HepG2 (cell line): ENCODE measurements at regions of chr1 and their contacts with region 1.

Region 1: GRCh38 chr1:151372061-151372934 is at the start of gene SELENBP1:
- DNase-seq: peak; percentile 81
- ATAC-seq: peak; percentile 93
- H3K4me3 ChIP-seq: peak within 1 kb of the TSS; percentile 61 to 79 (median 70)
- H3K27ac ChIP-seq: peak within 1 kb of the TSS; percentile 82
- H3K4me1 ChIP-seq: peaks cover 41% of the 10 kb centered on the region
- H3K27me3 ChIP-seq: no peaks in the 10 kb centered on the region; a peak in 1 of 5 replicates
- CTCF ChIP-seq: no peak
- EP300 ChIP-seq: no peak
- POLR2A ChIP-seq: peak; percentile 87 to 93
- RAD21 ChIP-seq: no peak
- total RNA-seq, gene SELENBP1: 29.0 and 30.2 TPM in 2 replicates

Region 2: DNA sequence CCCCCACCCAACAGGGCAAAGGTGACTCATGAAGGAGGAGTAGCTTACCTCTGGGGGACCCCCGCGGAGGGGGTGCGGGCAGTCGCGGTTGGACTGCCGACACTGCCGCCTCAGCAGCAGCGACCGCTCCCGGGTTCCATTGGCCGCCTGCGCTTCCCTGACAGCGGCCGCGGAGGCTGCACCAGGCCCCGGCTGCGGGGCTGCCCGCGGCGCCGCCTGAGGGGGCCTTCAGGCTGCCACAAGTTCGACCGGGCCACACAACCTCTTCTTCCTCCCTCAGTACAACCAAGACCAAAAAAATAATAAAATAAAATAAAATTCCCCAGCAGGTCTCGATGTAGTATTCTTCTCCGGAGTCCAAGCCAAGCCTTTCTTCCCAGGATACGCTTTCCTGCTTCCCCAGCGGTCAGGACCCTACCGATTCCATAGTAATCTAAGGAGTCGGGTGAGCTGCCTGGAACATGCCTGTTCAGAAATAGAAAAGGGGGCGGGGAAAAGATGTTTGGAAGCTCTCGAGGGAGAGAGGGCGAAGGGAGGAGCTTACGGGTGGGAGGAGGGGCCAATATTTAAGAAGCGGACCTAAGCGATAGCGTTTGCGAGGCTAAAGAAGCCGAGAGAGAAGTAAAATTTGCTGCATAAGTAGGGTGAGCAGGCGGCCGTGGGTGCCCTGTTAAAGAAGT is 44.9 kb before region 1 on chr1 and contains the start of gene PI4KB:
- CTCF ChIA-PET with region 1: no interaction called
- POLR2A ChIA-PET with region 1: interaction called, 12 read pairs
- in situ Hi-C with region 1: no loop called
- intact Hi-C with region 1: no loop called
- DNase-seq: peak; percentile 97
- ATAC-seq: peak; percentile 92
- H3K4me3 ChIP-seq: peak within 1 kb of the TSS; percentile 78 to 82 (median 79)
- H3K27ac ChIP-seq: peak within 1 kb of the TSS; percentile 93
- H3K4me1 ChIP-seq: peaks cover 33% of the 10 kb centered on the region
- H3K27me3 ChIP-seq: no peaks in the 10 kb centered on the region; a peak in 1 of 5 replicates
- CTCF ChIP-seq: no peak
- EP300 ChIP-seq: no peak
- POLR2A ChIP-seq: peak; percentile 58 to 69
- RAD21 ChIP-seq: no peak
- total RNA-seq, gene PI4KB: 18.6 and 19.5 TPM in 2 replicates

Region 3: DNA sequence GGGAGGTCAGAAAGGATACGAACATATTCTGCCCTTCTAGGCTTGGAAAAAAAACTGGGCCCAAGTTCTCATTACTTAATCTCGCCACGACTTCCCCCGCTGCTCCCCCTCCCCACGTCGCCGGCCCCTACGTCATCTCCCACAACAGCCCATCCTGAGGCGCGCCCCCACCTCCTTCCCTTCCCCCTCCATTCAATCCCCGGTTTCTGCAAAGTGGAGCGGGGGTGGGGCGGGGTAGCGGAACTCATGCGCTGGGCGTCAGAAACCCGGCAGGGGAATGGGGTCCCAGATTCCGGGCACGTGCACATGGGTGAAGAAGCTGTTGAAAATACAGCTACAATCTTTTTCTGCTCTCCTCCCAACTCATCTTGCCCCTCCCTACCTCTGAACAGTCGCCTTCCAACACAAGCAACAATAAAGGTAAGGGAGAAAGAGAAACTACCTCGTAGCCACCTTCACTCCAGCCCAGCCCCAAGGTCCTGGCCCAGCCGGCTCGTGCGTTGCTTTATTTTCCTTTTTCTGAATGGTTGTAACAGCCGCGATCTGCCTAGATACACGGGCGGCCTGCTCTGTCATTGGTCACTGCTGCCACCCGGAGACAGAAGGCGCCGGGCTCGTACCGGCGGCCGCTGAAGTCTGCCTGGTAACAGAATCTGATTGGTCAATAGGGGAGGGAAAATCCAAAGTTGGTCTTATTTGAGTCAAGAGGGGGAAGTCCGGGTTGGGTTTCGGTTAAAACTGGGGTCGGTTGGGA is 25.4 kb before region 1 on chr1 and contains the start of gene RFX5:
- CTCF ChIA-PET with region 1: no interaction called
- POLR2A ChIA-PET with region 1: interaction called, 11 read pairs
- in situ Hi-C with region 1: no loop called
- intact Hi-C with region 1: loop called (anchors 1 kb)
- DNase-seq: peak; percentile 95
- ATAC-seq: peak; percentile 98
- H3K4me3 ChIP-seq: peak within 1 kb of the TSS; percentile 62 to 73 (median 72)
- H3K27ac ChIP-seq: peak within 1 kb of the TSS; percentile 87
- H3K4me1 ChIP-seq: peaks cover 19% of the 10 kb centered on the region
- H3K27me3 ChIP-seq: no peaks in the 10 kb centered on the region
- CTCF ChIP-seq: 0 out of 2 replicates have a peak, but pooled peaks have one; percentile 12
- EP300 ChIP-seq: peak in 1 of 2 experiments; percentile 61; a peak in 2 of 4 replicates
- POLR2A ChIP-seq: peak; percentile 48 to 76; a peak in 3 of 4 replicates
- RAD21 ChIP-seq: no peak
- total RNA-seq, gene RFX5: 32.0 and 36.2 TPM in 2 replicates

Region 4: GRCh38 chr1:151352006-151352689 is 20.1 kb before region 1 on chr1:
- CTCF ChIA-PET with region 1: no interaction called
- POLR2A ChIA-PET with region 1: interaction called, 11 read pairs
- in situ Hi-C with region 1: no loop called
- intact Hi-C with region 1: loop called (anchors 1 kb)
- DNase-seq: peak; percentile 24
- ATAC-seq: no peak
- H3K4me3 ChIP-seq: no peak overlapping the region
- H3K27ac ChIP-seq: no peak overlapping the region
- H3K4me1 ChIP-seq: peaks cover 16% of the 10 kb centered on the region
- H3K27me3 ChIP-seq: no peaks in the 10 kb centered on the region
- CTCF ChIP-seq: no peak
- EP300 ChIP-seq: no peak
- POLR2A ChIP-seq: no peak
- RAD21 ChIP-seq: no peak

Region 5: DNA sequence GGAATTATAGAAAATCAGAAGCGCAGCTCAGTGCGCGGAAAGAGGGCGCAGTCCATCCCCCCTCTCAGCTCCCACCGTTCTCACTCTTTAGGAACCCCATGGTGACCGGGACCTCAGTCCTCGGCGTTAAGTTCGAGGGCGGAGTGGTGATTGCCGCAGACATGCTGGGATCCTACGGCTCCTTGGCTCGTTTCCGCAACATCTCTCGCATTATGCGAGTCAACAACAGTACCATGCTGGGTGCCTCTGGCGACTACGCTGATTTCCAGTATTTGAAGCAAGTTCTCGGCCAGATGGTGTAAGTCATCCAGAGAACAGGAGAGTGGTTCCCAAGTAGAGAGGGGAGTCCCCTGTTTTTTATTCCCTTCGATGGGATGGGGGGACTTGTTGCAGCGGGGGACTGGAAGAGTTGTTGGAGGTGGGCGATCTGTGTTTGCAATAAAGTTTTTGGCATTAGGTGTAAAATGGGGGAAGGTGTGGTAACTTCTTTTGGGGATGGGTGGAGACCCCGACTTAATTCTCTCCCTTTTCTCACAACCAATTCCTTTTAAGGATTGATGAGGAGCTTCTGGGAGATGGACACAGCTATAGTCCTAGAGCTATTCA is 27.7 kb after region 1 on chr1:
- CTCF ChIA-PET with region 1: no interaction called
- POLR2A ChIA-PET with region 1: interaction called, 24 read pairs
- in situ Hi-C with region 1: no loop called
- intact Hi-C with region 1: no loop called
- DNase-seq: no peak
- ATAC-seq: peak; percentile 30
- H3K4me3 ChIP-seq: peak overlapping the region; percentile 81 to 92 (median 86)
- H3K27ac ChIP-seq: peak overlapping the region; percentile 66
- H3K4me1 ChIP-seq: peaks cover 43% of the 10 kb centered on the region
- H3K27me3 ChIP-seq: no peaks in the 10 kb centered on the region; a peak in 1 of 5 replicates
- CTCF ChIP-seq: no peak
- EP300 ChIP-seq: no peak
- POLR2A ChIP-seq: no peak
- RAD21 ChIP-seq: no peak

Region 6: DNA sequence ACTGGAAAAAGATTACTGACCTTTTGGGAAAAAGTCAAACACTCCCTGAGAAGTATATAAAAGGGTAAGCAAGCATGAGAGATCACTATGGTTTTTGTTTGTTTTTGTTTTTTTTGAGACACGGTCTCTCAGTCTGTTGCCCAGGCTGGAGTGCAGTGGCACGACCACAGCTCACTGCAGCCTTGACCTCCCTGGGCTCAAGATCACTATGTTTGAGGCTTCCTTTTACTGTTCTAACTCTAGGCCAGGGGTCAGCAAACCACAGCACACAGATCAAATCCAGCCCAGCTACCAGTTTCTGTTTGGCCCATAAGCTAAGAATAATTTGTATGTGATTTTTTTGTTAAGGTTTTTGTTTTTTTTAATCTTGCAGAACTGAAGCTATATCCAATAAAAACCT is 52.8 kb after region 1 on chr1:
- CTCF ChIA-PET with region 1: no interaction called
- POLR2A ChIA-PET with region 1: no interaction called
- in situ Hi-C with region 1: no loop called
- intact Hi-C with region 1: no loop called
- DNase-seq: no peak
- ATAC-seq: peak; percentile 62; the same call in 1 of the 3 replicates
- H3K4me3 ChIP-seq: no peak overlapping the region
- H3K27ac ChIP-seq: peak overlapping the region; percentile 34
- H3K4me1 ChIP-seq: peaks cover 12% of the 10 kb centered on the region
- H3K27me3 ChIP-seq: no peaks in the 10 kb centered on the region
- CTCF ChIP-seq: no peak
- EP300 ChIP-seq: no peak
- POLR2A ChIP-seq: no peak
- RAD21 ChIP-seq: no peak